Dorsolateral prefrontal cortex (tissue), 120 donors: ENCODE measurements at regions of chr2 and their contacts with region 1.

Region 1: GRCh38 chr2:2577407-2577831 is 246.3 kb upstream of the MYT1L start:
- DNase-seq: peak; percentile 30 to 97 (median 91)
- H3K4me3 ChIP-seq: peak overlapping the region in 56 of 59 donors; percentile 5 to 68 (median 42)
- H3K27ac ChIP-seq: peak overlapping the region; percentile 53 to 98 (median 88)
- H3K27me3 ChIP-seq: no peaks in the 10 kb centered on the region
- CTCF ChIP-seq: peak in 7 of 56 donors; percentile 3 to 32 (median 22)

Region 2: DNA sequence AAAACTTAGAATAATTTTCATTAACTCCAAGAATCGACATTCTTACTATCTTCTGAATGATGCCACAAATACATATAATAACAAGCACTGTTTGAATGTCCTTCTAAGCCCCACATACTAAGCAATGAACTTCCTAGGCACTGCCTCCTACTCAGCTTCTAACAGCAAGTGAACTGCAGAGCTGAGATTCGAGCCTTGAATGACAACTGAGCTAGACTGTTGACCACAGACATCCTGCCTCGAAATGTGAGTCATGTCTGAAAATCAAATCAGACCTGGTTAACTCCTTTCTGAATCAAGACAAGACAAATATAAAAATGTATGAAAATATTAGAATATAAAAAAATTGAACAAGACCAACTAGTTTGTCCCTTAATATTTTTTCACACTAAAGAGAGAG is 354.5 kb before region 1 on chr2:
- intact Hi-C with region 1: no loop called
- DNase-seq: no peak
- H3K4me3 ChIP-seq: no peak overlapping the region
- H3K27ac ChIP-seq: no peak overlapping the region
- H3K27me3 ChIP-seq: no peaks in the 10 kb centered on the region
- CTCF ChIP-seq: no peak

Region 3: DNA sequence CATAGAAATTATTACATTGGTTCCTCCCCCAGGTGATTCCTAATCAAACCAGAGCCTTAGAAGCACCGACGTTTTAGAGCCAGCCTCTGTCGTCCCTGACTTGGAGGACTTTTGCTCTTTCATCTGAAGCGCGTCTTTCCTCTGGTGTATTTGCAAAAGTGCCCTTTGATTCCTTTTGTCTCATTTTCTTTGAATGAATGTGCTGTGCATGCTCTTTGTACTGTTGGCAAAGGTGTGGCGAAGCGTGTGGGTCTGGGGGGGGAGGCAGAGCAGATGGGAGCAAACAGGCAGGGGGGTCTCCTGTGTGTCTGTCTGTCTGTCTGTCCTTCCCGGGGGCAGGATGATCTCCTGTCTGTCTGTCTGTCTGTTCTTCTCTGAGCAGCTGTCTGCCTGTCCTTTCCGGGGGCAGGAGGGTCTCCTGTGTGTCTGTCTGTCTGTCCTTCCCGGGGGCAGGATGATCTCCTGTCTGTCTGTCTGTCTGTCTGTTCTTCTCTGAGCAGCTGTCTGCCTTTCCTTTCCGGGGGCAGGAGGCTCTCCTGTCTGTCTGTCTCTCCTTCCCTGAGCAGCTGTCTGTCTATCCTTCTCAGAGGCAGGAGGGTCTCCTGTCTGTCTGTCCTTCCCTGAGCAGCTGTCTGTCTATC is 40.9 kb before region 1 on chr2:
- intact Hi-C with region 1: no loop called
- DNase-seq: no peak
- H3K4me3 ChIP-seq: no peak overlapping the region
- H3K27ac ChIP-seq: no peak overlapping the region
- H3K27me3 ChIP-seq: peaks cover 0 to 4% (median 0%) of the 10 kb centered on the region in 45 donors
- CTCF ChIP-seq: no peak

Region 4: DNA sequence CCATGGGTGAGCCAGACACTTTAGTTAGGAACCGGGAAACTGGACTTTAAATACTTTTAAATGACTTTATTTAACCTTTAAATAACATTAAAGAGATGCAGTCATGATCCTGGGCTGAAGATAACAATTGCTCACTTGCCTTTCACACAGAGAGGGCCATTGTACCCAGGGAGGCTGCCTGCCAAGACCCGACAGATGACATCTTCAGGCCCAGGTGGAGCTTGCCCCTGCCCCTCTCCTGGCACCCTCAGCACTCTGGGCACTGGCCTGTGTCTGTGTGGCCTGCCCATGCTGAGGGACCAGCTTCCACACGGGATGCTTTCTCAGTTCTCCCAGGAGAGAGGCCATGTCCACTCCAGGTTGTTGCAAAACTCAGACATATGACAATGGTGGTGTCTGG is 30.0 kb before region 1 on chr2:
- intact Hi-C with region 1: loop called in 1 of 2 experiments (anchors 2 kb)
- DNase-seq: peak; percentile 16 to 88 (median 73)
- H3K4me3 ChIP-seq: no peak overlapping the region
- H3K27ac ChIP-seq: peak overlapping the region in 55 of 59 donors; percentile 2 to 88 (median 66)
- H3K27me3 ChIP-seq: no peaks in the 10 kb centered on the region
- CTCF ChIP-seq: no peak

Region 5: GRCh38 chr2:2613279-2614199 is 36.1 kb after region 1 on chr2:
- intact Hi-C with region 1: loop called in 1 of 2 experiments (anchors 1 kb)
- DNase-seq: peak; percentile 95 to 99 (median 97)
- H3K4me3 ChIP-seq: peak overlapping the region; percentile 26 to 76 (median 63)
- H3K27ac ChIP-seq: peak overlapping the region; percentile 58 to 96 (median 89)
- H3K27me3 ChIP-seq: no peaks in the 10 kb centered on the region
- CTCF ChIP-seq: peak in 36 of 56 donors; percentile 11 to 50 (median 34)